ENCODE measurements at regions of chr12 and their contacts with region 1.

Region 1: DNA sequence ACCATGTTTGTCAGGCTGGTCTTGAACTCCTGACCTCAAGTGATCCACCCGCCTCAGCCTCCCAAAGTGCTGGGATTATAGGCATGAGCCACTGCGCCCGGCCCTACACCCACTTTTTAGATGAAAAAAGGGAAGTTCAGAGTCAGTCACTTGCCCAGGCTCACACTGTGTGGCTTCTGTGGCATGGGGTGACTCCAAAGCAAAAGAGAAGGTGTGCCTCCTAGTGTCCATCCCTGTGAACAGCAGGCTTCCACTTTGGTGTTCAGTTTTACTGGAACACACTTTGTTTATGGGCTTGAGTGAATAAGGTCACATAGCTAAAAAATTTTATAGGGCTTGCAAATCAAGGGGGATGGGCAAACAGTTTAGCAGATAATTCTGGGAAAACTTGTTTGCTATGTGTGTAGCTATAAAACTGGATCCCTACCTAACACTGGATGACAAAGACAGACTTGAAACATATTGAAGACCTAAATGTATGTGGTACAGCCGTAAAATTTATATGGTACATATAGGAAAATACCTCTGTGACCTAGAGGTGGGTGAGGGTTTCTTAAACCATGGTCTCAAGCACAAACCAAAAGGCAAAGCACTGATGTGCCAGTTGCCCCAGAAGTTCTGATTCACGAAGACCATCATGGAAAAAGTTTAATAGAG is 54.9 kb downstream of the EID3 start:
- DNase-seq: peak; percentile 69
- H3K4me3 ChIP-seq: no peak overlapping the region
- H3K27ac ChIP-seq: no peak overlapping the region
- H3K4me1 ChIP-seq: no peaks in the 10 kb centered on the region
- H3K27me3 ChIP-seq: no peaks in the 10 kb centered on the region
- CTCF ChIP-seq: peak; percentile 87 to 92 (median 89)
- EP300 ChIP-seq: no peak
- POLR2A ChIP-seq: no peak

Region 2: DNA sequence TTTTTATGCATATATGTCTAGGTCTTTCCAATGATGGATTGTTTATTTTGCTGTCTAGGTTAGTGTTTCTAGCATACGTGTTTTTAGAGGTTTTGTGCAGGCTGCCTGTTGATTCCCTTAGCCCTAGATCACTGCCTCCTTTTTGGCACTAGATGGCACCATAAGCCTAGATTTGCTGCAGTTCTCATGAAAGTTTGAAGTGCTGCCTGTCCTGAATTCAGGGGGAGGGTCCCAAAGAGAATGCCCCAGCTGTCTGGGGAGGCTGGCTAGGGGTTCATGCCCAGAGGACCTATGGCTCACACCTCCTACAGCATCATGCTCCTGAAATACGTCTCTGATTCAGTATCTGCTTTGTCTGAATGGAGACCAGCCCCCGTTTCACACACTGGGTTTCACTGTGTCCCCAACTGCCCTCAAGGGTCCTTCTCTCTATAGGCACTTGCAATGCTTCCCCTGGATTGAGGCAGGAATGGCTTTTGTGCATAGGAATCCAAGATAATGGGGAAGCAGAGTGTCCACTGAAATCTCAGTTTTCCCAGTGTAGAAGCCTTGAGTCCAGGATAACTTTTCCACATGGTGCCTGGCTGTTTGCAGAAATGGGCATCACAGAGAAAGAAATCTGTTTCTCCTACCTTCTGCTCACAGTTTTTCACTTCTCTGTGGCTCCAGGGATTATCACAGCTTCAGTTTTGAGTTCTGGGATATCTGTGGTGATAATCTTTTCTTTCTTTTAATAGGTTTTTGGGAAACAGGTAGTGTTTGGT is 157.1 kb before region 1 on chr12:
- in situ Hi-C with region 1: loop called (anchors 5 to 10 kb)
- intact Hi-C with region 1: loop called (anchors 5 kb)
- DNase-seq: peak; percentile 26
- H3K4me3 ChIP-seq: no peak overlapping the region
- H3K27ac ChIP-seq: no peak overlapping the region
- H3K4me1 ChIP-seq: peaks cover 0 to 3% (median 0%) of the 10 kb centered on the region in 4 donors
- H3K27me3 ChIP-seq: no peaks in the 10 kb centered on the region
- CTCF ChIP-seq: peak; percentile 73 to 83 (median 75)
- EP300 ChIP-seq: no peak
- POLR2A ChIP-seq: no peak

Region 3: GRCh38 chr12:105053116-105053572 is 694.7 kb after region 1 on chr12:
- in situ Hi-C with region 1: loop called in 1 of 4 experiments (anchors 25 kb)
- intact Hi-C with region 1: no loop called
- DNase-seq: peak; percentile 82
- H3K4me3 ChIP-seq: no peak overlapping the region
- H3K27ac ChIP-seq: no peak overlapping the region
- H3K4me1 ChIP-seq: peaks cover 0 to 3% (median 0%) of the 10 kb centered on the region in 4 donors
- H3K27me3 ChIP-seq: no peaks in the 10 kb centered on the region
- CTCF ChIP-seq: peak; percentile 85 to 94 (median 91)
- EP300 ChIP-seq: no peak
- POLR2A ChIP-seq: no peak